Gastrocnemius medialis (tissue), 4 donors: ENCODE measurements at regions of chr1 and their contacts with region 1.

Region 1: GRCh38 chr1:183471743-183472487 is 384 bp upstream of the SMG7 start:
- DNase-seq: peak; percentile 97
- ATAC-seq: peak; percentile 84 to 86
- H3K4me3 ChIP-seq: peak overlapping the region; percentile 95 to 99 (median 97)
- H3K27ac ChIP-seq: peak overlapping the region; percentile 96 to 98 (median 98)
- H3K4me1 ChIP-seq: peaks cover 35 to 41% of the 10 kb centered on the region in 2 donors
- H3K27me3 ChIP-seq: no peaks in the 10 kb centered on the region
- CTCF ChIP-seq: peak in 2 of 5 experiments; percentile 9 to 37
- POLR2A ChIP-seq: no peak

Region 2: GRCh38 chr1:183023601-183024316 is 448.2 kb before region 1 on chr1:
- in situ Hi-C with region 1: no loop called
- intact Hi-C with region 1: loop called (anchors 5 kb)
- DNase-seq: peak; percentile 85
- ATAC-seq: peak; percentile 57 to 61
- H3K4me3 ChIP-seq: peak overlapping the region; percentile 76 to 91 (median 85)
- H3K27ac ChIP-seq: peak overlapping the region; percentile 94 to 100 (median 98)
- H3K4me1 ChIP-seq: peaks cover 48 to 64% of the 10 kb centered on the region in 2 donors
- H3K27me3 ChIP-seq: no peaks in the 10 kb centered on the region
- CTCF ChIP-seq: peak; percentile 62 to 81 (median 78)
- POLR2A ChIP-seq: peak; percentile 46 to 60

Region 3: GRCh38 chr1:183281553-183282091 is 190.3 kb before region 1 on chr1:
- in situ Hi-C with region 1: no loop called
- intact Hi-C with region 1: loop called (anchors 5 kb)
- DNase-seq: peak; percentile 85 to 89
- ATAC-seq: peak; percentile 88 to 94
- H3K4me3 ChIP-seq: peak overlapping the region; percentile 6 to 72 (median 29)
- H3K27ac ChIP-seq: peak overlapping the region; percentile 63 to 78 (median 74)
- H3K4me1 ChIP-seq: peaks cover 22 to 26% of the 10 kb centered on the region in 2 donors
- H3K27me3 ChIP-seq: no peaks in the 10 kb centered on the region
- CTCF ChIP-seq: peak; percentile 86 to 94 (median 90)
- POLR2A ChIP-seq: no peak

Region 4: DNA sequence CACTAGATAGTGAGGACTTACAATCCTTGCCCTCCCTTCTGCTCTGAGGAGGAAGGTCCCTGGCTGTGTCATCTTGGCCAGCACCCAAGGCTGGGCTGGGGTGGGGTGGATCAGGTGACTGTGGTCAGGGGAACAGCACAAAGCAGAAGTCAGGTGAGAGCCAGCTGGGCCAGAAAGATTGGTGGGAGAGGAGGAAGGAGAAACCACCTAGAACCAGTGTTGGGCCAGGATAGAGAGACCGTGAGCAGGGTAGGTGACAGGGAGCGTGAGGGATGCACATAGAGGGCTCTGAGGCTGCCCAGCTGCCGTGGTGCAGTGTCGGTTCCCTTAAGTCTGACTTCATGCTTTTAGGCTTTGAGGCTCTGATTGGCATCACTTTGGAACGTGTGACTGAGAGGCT is 95.7 kb after region 1 on chr1:
- in situ Hi-C with region 1: no loop called
- intact Hi-C with region 1: no loop called
- DNase-seq: peak in 1 of 2 donors; percentile 32
- ATAC-seq: no peak
- H3K4me3 ChIP-seq: no peak overlapping the region
- H3K27ac ChIP-seq: no peak overlapping the region
- H3K4me1 ChIP-seq: no peaks in the 10 kb centered on the region
- H3K27me3 ChIP-seq: no peaks in the 10 kb centered on the region
- CTCF ChIP-seq: no peak
- POLR2A ChIP-seq: no peak

Region 5: DNA sequence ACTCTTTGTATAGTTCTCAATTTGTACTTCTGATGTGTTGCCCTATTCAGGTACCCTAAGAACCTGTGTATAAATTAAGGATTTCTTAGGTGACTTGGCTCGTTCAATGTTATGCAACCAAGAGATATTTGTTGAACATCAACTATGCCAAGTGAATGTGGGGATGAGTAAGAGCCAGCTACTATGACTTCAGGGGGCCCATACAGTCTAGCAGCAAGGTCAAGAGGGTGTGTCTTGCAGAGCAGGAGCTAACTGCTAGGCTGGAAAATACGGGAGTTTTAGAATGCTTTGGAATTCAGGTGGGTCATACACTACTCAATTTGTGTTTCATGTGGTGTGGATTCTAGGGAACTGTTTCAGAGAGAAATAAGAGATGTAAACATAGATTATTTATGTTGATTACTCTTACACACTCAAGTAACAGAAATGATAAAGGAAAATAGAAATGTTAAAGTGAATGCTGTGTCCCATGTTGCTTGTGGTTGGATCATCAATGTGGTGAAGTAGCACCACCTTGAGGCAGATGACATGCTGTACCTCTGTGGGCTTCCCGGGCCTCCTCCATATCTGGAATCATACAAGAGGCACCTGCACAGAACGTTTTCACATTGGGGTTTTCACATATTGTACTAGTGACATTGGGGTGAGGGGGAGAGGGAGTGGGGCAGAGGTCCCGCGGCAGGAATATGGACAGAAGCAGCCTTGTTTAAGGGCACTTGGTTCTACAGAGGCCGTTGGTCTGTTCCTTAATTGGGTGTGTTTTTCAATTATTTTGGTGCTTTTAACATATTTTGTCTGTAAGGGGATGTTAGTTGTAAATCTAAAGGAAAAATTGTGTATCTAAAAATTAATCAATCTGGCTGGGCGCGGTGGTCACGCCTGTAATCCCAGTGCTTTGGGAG is 151.2 kb after region 1 on chr1:
- in situ Hi-C with region 1: loop called in 2 of 4 experiments (anchors 5 to 25 kb)
- intact Hi-C with region 1: loop called (anchors 1 kb)
- DNase-seq: peak in 1 of 2 donors; percentile 32
- ATAC-seq: peak; percentile 81 to 87
- H3K4me3 ChIP-seq: no peak overlapping the region
- H3K27ac ChIP-seq: no peak overlapping the region
- H3K4me1 ChIP-seq: peaks cover 0 to 5% of the 10 kb centered on the region in 2 donors
- H3K27me3 ChIP-seq: no peaks in the 10 kb centered on the region
- CTCF ChIP-seq: peak in 4 of 5 experiments; percentile 27 to 69 (median 42)
- POLR2A ChIP-seq: no peak

Region 6: GRCh38 chr1:183837062-183837461 is 365.1 kb after region 1 on chr1:
- in situ Hi-C with region 1: no loop called
- intact Hi-C with region 1: no loop called
- DNase-seq: no peak
- ATAC-seq: no peak
- H3K4me3 ChIP-seq: no peak overlapping the region
- H3K27ac ChIP-seq: no peak overlapping the region
- H3K4me1 ChIP-seq: no peaks in the 10 kb centered on the region
- H3K27me3 ChIP-seq: no peaks in the 10 kb centered on the region
- CTCF ChIP-seq: no peak
- POLR2A ChIP-seq: no peak

Region 7: DNA sequence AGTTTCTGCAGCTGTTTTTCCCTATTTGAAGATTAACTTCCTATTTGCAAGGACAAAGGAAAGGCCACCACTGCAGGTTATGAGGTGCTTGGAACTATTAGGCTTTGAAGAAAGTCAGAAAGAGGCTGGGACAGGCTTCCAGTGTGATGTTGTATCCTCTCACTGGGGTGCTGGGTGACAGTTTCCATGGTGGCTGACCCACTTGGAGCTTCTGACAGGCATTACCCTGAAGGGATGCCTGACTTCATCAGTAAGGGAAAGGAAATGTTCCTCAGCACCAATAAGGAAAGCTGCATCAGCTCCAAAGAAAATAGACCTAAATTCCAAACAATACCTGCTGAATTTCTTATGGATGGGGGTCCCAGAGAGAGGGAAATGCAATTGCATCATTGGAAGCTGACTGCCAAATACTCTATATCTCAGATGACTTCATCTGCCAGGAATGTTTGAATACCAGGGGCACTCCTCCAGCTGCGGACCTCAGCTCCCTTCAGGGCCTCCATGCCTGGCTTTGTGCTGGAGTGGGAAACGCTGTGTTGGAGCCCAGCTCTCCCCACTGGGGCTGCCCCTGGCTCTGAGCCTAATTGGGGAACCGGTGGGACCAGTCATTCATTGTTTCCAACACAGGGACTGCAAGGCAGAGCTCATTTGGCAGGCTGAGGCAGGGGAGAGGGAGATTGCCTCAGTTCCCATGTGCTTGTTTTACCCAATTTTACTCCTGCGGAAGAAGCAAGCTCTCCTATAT is 409.6 kb after region 1 on chr1:
- in situ Hi-C with region 1: loop called in 1 of 4 experiments (anchors 25 kb)
- intact Hi-C with region 1: no loop called
- DNase-seq: no peak
- ATAC-seq: no peak
- H3K4me3 ChIP-seq: no peak overlapping the region
- H3K27ac ChIP-seq: peak overlapping the region in 1 of 4 donors; percentile 32
- H3K4me1 ChIP-seq: peaks cover 12 to 16% of the 10 kb centered on the region in 2 donors
- H3K27me3 ChIP-seq: no peaks in the 10 kb centered on the region
- CTCF ChIP-seq: no peak
- POLR2A ChIP-seq: no peak

Region 8: GRCh38 chr1:185156854-185157598 is 1685.1 kb after region 1 on chr1 and contains the starts of genes SWT1 and TRMT1L:
- in situ Hi-C with region 1: no loop called
- intact Hi-C with region 1: loop called (anchors 5 kb)
- DNase-seq: peak; percentile 99 to 100
- ATAC-seq: peak; percentile 94 to 96
- H3K4me3 ChIP-seq: peak within 1 kb of the TSS; percentile 75 to 99 (median 96)
- H3K27ac ChIP-seq: peak within 1 kb of the TSS; percentile 93 to 99 (median 98)
- H3K4me1 ChIP-seq: peaks cover 25 to 36% of the 10 kb centered on the region in 2 donors
- H3K27me3 ChIP-seq: no peaks in the 10 kb centered on the region
- CTCF ChIP-seq: no peak
- POLR2A ChIP-seq: peak; percentile 94 to 95
- total RNA-seq, gene SWT1: 3.4 to 6.2 (median 4.6) TPM
- total RNA-seq, gene TRMT1L: 24.9 to 42.8 (median 30.0) TPM